Naive thymus-derived CD4-positive, alpha-beta T cell (primary cell): ENCODE measurements at regions of chr2 and their contacts with region 1.

Region 1: DNA sequence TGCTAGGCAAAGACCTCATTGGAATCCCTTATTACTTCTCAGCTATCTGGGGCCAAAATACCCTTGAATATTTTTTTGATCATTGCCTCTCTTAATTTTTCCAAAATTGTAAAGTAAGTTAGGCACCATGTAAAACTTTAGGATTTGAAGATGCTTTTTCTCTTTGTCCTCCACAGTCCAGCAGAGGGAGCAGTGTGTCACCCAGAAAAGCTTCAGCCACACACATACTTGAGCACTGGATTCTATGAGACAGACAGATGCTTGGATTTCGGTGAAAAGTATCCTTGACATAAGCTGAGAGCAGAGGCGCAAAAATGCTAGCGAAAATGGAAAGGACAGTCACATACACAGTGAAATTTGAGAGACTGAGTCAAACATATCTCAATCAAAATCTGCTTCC is 74.7 kb upstream of the KCNJ3 start:
- DNase-seq: no peak
- ATAC-seq: peak; percentile 18
- H3K4me3 ChIP-seq: no peak overlapping the region
- H3K4me3 Mint-ChIP-seq: no peak overlapping the region
- H3K27ac ChIP-seq: no peak overlapping the region
- H3K27ac Mint-ChIP-seq: no peak overlapping the region
- H3K4me1 ChIP-seq: no peaks in the 10 kb centered on the region
- H3K4me1 Mint-ChIP-seq: no peaks in the 10 kb centered on the region
- H3K27me3 ChIP-seq: no peaks in the 10 kb centered on the region
- H3K27me3 Mint-ChIP-seq: no peaks in the 10 kb centered on the region

Region 2: DNA sequence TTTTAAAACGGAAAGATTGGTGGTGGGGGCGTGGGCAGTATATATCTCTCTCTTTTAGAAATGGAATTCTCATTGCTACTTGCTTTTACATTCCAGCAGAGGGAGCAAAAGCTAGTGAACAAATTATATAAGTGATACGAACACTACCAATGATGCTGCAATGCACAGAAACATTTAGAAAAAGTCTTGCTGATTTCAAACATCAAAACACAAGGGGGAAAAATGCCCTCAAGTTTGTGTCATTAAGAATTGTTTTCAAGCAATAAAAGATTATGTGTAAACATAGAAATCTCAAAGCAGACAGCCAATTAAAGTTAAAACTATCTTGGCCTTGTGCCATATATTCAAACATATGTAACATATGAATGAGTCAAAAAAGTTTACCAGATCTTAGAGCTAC is 221.6 kb before region 1 on chr2:
- CTCF ChIA-PET with region 1: no interaction called
- POLR2A ChIA-PET with region 1: no interaction called
- intact Hi-C with region 1: loop called in 1 of 2 experiments (anchors 10 kb)
- DNase-seq: peak in 4 of 9 donors; percentile 7 to 28 (median 15)
- ATAC-seq: no peak
- H3K4me3 ChIP-seq: no peak overlapping the region
- H3K4me3 Mint-ChIP-seq: no peak overlapping the region
- H3K27ac ChIP-seq: no peak overlapping the region
- H3K27ac Mint-ChIP-seq: no peak overlapping the region
- H3K4me1 ChIP-seq: no peaks in the 10 kb centered on the region
- H3K4me1 Mint-ChIP-seq: peaks cover 0 to 7% (median 0%) of the 10 kb centered on the region in 7 donors
- H3K27me3 ChIP-seq: no peaks in the 10 kb centered on the region
- H3K27me3 Mint-ChIP-seq: no peaks in the 10 kb centered on the region

Region 3: GRCh38 chr2:155115846-155116245 is 492.0 kb after region 1 on chr2:
- CTCF ChIA-PET with region 1: no interaction called
- POLR2A ChIA-PET with region 1: no interaction called
- intact Hi-C with region 1: no loop called
- DNase-seq: no peak
- ATAC-seq: no peak
- H3K4me3 ChIP-seq: no peak overlapping the region
- H3K4me3 Mint-ChIP-seq: no peak overlapping the region
- H3K27ac ChIP-seq: no peak overlapping the region
- H3K27ac Mint-ChIP-seq: no peak overlapping the region
- H3K4me1 ChIP-seq: no peaks in the 10 kb centered on the region
- H3K4me1 Mint-ChIP-seq: no peaks in the 10 kb centered on the region
- H3K27me3 ChIP-seq: no peaks in the 10 kb centered on the region
- H3K27me3 Mint-ChIP-seq: no peaks in the 10 kb centered on the region

Region 4: GRCh38 chr2:155310589-155310988 is 686.8 kb after region 1 on chr2:
- CTCF ChIA-PET with region 1: no interaction called
- POLR2A ChIA-PET with region 1: no interaction called
- intact Hi-C with region 1: loop called in 1 of 2 experiments (anchors 5 kb)
- DNase-seq: no peak
- ATAC-seq: no peak
- H3K4me3 ChIP-seq: no peak overlapping the region
- H3K4me3 Mint-ChIP-seq: no peak overlapping the region
- H3K27ac ChIP-seq: no peak overlapping the region
- H3K27ac Mint-ChIP-seq: no peak overlapping the region
- H3K4me1 ChIP-seq: no peaks in the 10 kb centered on the region
- H3K4me1 Mint-ChIP-seq: no peaks in the 10 kb centered on the region
- H3K27me3 ChIP-seq: no peaks in the 10 kb centered on the region
- H3K27me3 Mint-ChIP-seq: no peaks in the 10 kb centered on the region